ENCODE measurements at regions of chr5 and their contacts with region 1.

Region 1: GRCh38 chr5:168020542-168021294 is 270.7 kb upstream of the WWC1 start:
- DNase-seq: peak; percentile 37
- ATAC-seq: peak in 1 of 2 donors; percentile 36

Region 2: GRCh38 chr5:167723254-167723871 is 297.4 kb before region 1 on chr5:
- intact Hi-C with region 1: loop called in 1 of 2 experiments (anchors 5 kb)
- DNase-seq: peak; percentile 69
- ATAC-seq: peak; percentile 91 to 92